Activated CD4-positive, alpha-beta T cell treated with anti-CD3 and anti-CD28 coated beads for 36 hours (primary cell): ENCODE measurements at regions of chr18 and their contacts with region 1.

Region 1: DNA sequence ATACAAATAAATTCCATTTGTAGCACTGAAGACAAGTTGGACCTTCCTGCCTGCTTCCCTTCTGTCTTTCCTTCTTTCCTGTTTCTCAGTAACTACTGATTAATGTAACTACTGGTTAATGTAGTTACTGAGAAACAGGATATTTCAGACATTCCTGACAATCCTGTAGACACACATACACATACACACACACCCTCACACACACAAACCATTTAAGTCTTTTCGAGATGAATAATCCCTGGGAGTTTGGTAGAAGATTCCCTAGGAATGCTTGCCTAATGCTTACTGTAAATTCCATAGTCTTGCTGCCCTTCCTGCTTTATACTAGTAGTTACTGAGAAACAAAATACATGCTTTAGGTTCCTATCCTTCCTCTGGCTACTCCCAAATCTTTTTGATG is 83.9 kb downstream of the PIK3C3 start:
- DNase-seq: no peak
- ATAC-seq: no peak
- H3K4me3 Mint-ChIP-seq: no peak overlapping the region
- H3K27ac Mint-ChIP-seq: no peak overlapping the region
- H3K4me1 Mint-ChIP-seq: no peaks in the 10 kb centered on the region
- H3K27me3 Mint-ChIP-seq: no peaks in the 10 kb centered on the region

Region 2: DNA sequence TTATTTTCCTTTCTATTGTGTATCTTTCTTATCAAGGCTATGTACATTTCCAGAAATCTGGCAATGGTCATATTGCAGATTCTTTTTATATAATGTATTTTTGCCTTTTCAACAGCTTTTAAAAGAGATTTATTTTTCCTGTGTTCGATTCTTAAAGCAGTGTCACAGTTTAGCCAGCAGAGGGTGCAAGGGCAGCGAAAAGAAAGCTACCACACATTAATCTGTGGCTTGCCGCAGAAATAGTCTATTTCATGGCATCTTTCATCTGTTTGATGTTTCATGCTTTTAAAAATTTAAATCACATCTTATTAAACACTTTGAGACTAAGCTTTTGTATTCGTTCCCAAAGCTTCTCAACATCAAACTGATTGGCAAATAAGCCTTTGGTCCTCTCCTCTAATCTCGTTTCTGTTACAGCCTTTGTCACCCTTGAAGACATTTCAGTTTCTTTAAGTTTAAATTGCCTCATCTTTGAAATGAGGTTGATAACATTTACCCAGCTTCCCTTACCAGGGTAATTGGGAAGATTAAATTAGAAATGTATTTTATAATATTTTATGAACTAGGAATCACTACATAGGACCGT is 10.6 kb before region 1 on chr18:
- CTCF ChIA-PET with region 1: interaction called, 21 read pairs
- POLR2A ChIA-PET with region 1: no interaction called
- intact Hi-C with region 1: no loop called
- DNase-seq: peak; percentile 47
- ATAC-seq: no peak
- H3K4me3 Mint-ChIP-seq: no peak overlapping the region
- H3K27ac Mint-ChIP-seq: no peak overlapping the region
- H3K4me1 Mint-ChIP-seq: peaks cover 28% of the 10 kb centered on the region
- H3K27me3 Mint-ChIP-seq: no peaks in the 10 kb centered on the region